Psoas muscle (tissue), 8 donors: ENCODE measurements at regions of chr11 and their contacts with region 1.

Region 1: GRCh38 chr11:57345555-57346211 is 7.5 kb downstream of the P2RX3 start:
- DNase-seq: peak; percentile 61 to 74
- ATAC-seq: peak; percentile 83 to 91 (median 84)
- H3K4me3 ChIP-seq: no peak overlapping the region
- H3K27ac ChIP-seq: no peak overlapping the region
- H3K4me1 ChIP-seq: no peaks in the 10 kb centered on the region
- H3K27me3 ChIP-seq: no peaks in the 10 kb centered on the region
- CTCF ChIP-seq: peak; percentile 82

Region 2: DNA sequence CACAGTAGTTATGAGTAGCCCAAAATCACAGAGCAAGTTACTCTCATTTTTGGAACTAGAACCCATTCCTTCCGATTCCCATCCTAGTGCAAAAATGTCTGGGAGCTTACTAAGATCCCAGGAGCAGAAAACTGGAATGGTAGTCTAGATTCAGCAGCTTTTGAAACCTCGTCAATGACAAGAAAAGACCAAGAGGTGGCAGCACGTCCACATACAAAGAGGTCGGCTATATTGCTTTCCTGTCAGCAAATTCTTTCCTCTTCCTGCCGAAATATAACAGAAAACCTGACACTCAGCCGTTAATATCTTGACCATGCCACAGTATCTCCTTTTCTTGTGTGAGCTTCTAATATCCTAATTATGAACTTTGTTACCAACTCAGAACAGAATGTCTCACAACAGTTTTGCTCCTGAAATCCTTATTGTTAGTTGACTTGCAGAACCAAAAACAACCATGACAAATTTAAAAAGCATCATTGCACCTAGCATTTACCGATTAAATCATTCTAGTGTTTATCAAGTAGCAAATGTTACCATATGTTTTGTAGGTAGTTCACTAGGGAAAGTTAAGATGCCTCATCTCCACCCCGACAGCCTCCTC is 504.4 kb before region 1 on chr11:
- intact Hi-C with region 1: loop called in 1 of 2 experiments (anchors 10 kb)
- DNase-seq: peak; percentile 15 to 38
- ATAC-seq: peak in 3 of 4 donors; percentile 47 to 74 (median 64)
- H3K4me3 ChIP-seq: no peak overlapping the region
- H3K27ac ChIP-seq: no peak overlapping the region
- H3K4me1 ChIP-seq: no peaks in the 10 kb centered on the region
- H3K27me3 ChIP-seq: peaks cover 0 to 2% (median 0%) of the 10 kb centered on the region in 3 donors
- CTCF ChIP-seq: peak; percentile 71

Region 3: GRCh38 chr11:57277845-57278709 is 67.6 kb before region 1 on chr11:
- intact Hi-C with region 1: no loop called
- DNase-seq: peak; percentile 71 to 84
- ATAC-seq: peak; percentile 82 to 93 (median 86)
- H3K4me3 ChIP-seq: peak overlapping the region; percentile 41
- H3K27ac ChIP-seq: peak overlapping the region; percentile 73
- H3K4me1 ChIP-seq: peaks cover 15% of the 10 kb centered on the region
- H3K27me3 ChIP-seq: no peaks in the 10 kb centered on the region
- CTCF ChIP-seq: peak; percentile 77

Region 4: DNA sequence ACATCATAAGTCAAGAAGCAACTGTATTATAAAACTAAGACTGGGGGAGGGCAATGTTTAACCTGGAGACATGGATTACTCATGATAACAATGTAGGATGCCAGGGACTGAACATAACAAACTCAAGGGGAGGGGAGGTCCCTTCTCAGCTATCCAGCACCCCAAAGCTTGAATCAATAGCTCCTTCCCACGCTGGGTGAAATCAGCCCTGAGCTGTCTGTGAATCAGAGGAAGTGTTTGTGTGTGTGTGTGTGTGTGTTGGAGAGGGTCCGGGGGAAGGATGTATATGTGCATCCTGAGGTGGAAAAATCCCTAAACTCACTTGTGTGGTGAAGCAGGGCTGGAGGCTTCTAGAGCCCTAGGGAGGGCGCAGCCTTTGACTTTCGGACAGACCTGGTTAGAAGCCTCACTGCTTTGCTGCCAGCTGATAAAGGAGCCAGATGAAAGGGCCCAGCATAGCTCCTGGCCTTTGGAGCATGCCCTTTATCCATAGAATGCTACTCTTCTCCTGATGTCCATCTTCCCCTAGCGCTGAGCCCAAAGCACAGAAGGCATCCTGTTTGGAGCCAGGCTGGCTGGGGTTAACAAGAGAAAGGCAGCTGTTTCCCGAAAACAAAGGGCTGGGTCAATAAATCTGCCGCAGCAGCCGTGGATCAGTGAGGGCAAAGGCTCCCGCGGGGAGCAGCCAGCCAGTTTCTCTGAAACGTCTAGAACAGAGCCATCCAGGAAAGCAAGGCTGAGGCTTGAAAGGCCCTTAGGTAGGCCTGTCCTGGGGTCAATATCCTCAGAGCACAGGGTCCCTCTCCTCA is 56.7 kb before region 1 on chr11:
- intact Hi-C with region 1: no loop called
- DNase-seq: no peak
- ATAC-seq: no peak
- H3K4me3 ChIP-seq: no peak overlapping the region
- H3K27ac ChIP-seq: peak overlapping the region; percentile 23
- H3K4me1 ChIP-seq: peaks cover 3% of the 10 kb centered on the region
- H3K27me3 ChIP-seq: no peaks in the 10 kb centered on the region
- CTCF ChIP-seq: no peak

Region 5: GRCh38 chr11:57426929-57427726 is 81.4 kb after region 1 on chr11 and contains the start of gene SLC43A3:
- intact Hi-C with region 1: loop called in 1 of 2 experiments (anchors 5 kb)
- DNase-seq: peak; percentile 80 to 85
- ATAC-seq: peak; percentile 54 to 66 (median 60)
- H3K4me3 ChIP-seq: peak within 1 kb of the TSS; percentile 66
- H3K27ac ChIP-seq: peak within 1 kb of the TSS; percentile 84
- H3K4me1 ChIP-seq: peaks cover 32% of the 10 kb centered on the region
- H3K27me3 ChIP-seq: peaks cover 0 to 33% (median 0%) of the 10 kb centered on the region in 3 donors
- CTCF ChIP-seq: no peak
- total RNA-seq, gene SLC43A3: 10.6 to 18.8 (median 16.0) TPM

Region 6: GRCh38 chr11:57456960-57457642 is 111.4 kb after region 1 on chr11:
- intact Hi-C with region 1: loop called (anchors 1 to 5 kb)
- DNase-seq: peak; percentile 92 to 95
- ATAC-seq: peak; percentile 89 to 96 (median 94)
- H3K4me3 ChIP-seq: peak overlapping the region; percentile 4
- H3K27ac ChIP-seq: no peak overlapping the region
- H3K4me1 ChIP-seq: peaks cover 19% of the 10 kb centered on the region
- H3K27me3 ChIP-seq: peaks cover 0 to 38% (median 18%) of the 10 kb centered on the region in 3 donors
- CTCF ChIP-seq: peak; percentile 99

Region 7: GRCh38 chr11:57480409-57481137 is 134.9 kb after region 1 on chr11:
- intact Hi-C with region 1: loop called (anchors 5 kb)
- DNase-seq: peak; percentile 66 to 82
- ATAC-seq: peak; percentile 31 to 46 (median 36)
- H3K4me3 ChIP-seq: no peak overlapping the region
- H3K27ac ChIP-seq: no peak overlapping the region
- H3K4me1 ChIP-seq: peaks cover 10% of the 10 kb centered on the region
- H3K27me3 ChIP-seq: peaks cover 0 to 6% (median 5%) of the 10 kb centered on the region in 3 donors
- CTCF ChIP-seq: peak; percentile 68

Region 8: DNA sequence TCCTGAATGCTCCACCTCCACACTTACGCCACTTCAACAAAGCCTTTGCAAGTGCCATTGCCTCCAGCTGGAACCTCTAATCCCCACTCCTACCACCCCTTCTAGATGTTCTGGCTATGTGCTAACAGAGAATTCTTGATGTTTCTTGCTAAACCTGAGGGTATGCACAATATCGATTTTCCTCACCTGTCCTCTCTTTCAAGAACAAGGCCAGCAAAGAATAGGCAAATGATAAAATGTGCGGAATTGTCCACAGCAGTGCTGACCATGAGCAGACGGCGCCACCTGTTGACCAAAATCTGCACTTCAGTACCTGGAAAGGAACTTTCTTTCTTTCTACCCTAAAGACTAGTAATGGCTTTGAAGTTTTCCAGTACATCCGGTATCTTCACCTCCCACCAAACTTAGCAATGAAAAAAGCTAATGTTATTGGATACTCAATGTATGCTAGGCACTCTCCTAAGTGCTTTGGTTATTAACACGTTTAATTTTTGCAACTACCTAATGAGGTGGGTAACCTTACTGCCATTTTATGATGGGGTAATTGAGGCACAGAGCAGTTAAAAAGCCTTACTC is 181.5 kb after region 1 on chr11:
- intact Hi-C with region 1: loop called in 1 of 2 experiments (anchors 5 kb)
- DNase-seq: peak; percentile 55 to 79
- ATAC-seq: peak in 2 of 4 donors; percentile 31 to 39
- H3K4me3 ChIP-seq: no peak overlapping the region
- H3K27ac ChIP-seq: no peak overlapping the region
- H3K4me1 ChIP-seq: peaks cover 15% of the 10 kb centered on the region
- H3K27me3 ChIP-seq: no peaks in the 10 kb centered on the region
- CTCF ChIP-seq: peak; percentile 96

Region 9: DNA sequence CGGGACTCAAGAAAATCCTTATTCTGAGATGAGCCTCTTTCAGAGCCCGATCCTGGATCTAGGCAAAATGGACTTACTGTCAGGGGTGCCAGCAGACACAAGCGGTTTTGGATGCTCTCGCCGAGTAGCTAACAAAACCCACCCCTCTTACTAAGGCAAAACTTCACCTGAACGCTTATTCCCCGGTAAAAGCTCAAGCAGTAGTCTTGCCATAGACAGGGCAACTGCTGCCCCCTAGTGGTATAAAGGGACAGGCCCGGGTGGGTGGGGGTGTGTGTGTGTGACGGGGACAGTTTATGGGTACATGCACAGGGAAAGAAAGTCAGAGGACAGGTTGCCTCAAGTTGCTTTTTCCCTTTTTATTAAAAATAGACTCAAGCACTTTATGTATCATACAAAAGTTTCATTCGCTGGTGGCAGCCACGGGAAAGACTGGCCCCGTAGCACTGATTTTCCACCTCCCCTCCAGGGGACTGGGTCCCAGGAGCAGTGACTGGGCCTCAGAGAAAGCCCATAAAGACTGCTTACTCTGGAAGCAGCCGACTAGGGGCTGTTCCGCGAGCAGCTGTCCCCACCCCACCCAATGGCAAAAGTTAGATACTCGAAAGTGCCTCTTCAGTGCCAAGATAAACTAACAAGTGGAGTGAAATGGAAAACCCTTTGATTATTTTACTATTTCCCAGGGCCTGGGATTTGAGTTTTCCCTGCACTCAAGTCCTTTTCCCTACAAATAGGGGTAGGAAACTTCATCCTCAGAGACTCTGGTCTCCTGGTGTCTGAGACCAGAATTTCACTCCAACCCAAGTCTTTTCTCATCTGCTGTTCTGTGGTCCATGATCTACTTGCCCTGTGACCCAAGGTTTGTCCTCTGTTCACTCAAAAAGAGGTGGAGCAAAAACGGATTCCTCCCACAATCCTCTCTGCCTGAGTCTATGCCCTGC is 299.3 kb after region 1 on chr11:
- intact Hi-C with region 1: loop called (anchors 5 kb)
- DNase-seq: peak; percentile 78 to 87
- ATAC-seq: peak; percentile 75 to 89 (median 82)
- H3K4me3 ChIP-seq: no peak overlapping the region
- H3K27ac ChIP-seq: no peak overlapping the region
- H3K4me1 ChIP-seq: peaks cover 8% of the 10 kb centered on the region
- H3K27me3 ChIP-seq: peaks cover 0 to 45% (median 30%) of the 10 kb centered on the region in 3 donors
- CTCF ChIP-seq: peak; percentile 81